Activated T-helper 1 cell treated with anti-CD3 and anti-CD28 coated beads, Interleukin-12 subunit alpha, Interleukin-12 subunit beta, Interleukin-2, Interleukin-4 antibody, amounts not matched to agents 30 ng/mL and 10 ng/mL and 1 ng/mL, durations not matched to agents 14 hours and 24 hours and 36 hours (primary cell): ENCODE measurements at regions of chr4 and their contacts with region 1.

Region 1: GRCh38 chr4:77240469-77241066 is 83.6 kb downstream of the CCNG2 start:
- DNase-seq: peak; percentile 12
- H3K4me3 Mint-ChIP-seq: no peak overlapping the region
- H3K27ac Mint-ChIP-seq: no peak overlapping the region
- H3K4me1 Mint-ChIP-seq: no peaks in the 10 kb centered on the region
- H3K27me3 Mint-ChIP-seq: peaks cover 10% of the 10 kb centered on the region

Region 2: GRCh38 chr4:77269161-77269904 is 28.8 kb after region 1 on chr4:
- intact Hi-C with region 1: no loop called
- DNase-seq: no peak
- H3K4me3 Mint-ChIP-seq: no peak overlapping the region
- H3K27ac Mint-ChIP-seq: no peak overlapping the region
- H3K4me1 Mint-ChIP-seq: no peaks in the 10 kb centered on the region
- H3K27me3 Mint-ChIP-seq: peaks cover 2% of the 10 kb centered on the region

Region 3: DNA sequence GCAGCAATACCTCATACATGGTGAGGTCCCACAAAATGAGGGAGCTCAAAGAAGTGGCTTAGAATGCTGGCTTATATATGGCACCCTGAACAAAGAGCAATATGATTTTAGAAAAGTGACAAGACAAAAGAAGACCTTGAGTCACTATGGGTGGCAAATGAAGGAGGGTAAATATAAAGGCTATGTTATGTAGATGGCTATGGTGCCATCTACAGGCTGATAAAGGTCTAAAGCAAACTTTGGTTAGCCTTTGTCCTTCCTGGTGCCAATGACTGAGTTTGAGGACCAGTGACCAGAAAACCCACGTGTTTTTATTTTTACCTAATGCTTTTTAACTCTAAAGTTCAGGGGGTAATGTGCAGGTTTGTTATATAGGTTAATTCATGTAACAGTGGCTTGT is 68.3 kb after region 1 on chr4:
- intact Hi-C with region 1: loop called (anchors 1 kb)
- DNase-seq: no peak
- H3K4me3 Mint-ChIP-seq: no peak overlapping the region
- H3K27ac Mint-ChIP-seq: no peak overlapping the region
- H3K4me1 Mint-ChIP-seq: no peaks in the 10 kb centered on the region
- H3K27me3 Mint-ChIP-seq: peaks cover 5% of the 10 kb centered on the region

Region 4: DNA sequence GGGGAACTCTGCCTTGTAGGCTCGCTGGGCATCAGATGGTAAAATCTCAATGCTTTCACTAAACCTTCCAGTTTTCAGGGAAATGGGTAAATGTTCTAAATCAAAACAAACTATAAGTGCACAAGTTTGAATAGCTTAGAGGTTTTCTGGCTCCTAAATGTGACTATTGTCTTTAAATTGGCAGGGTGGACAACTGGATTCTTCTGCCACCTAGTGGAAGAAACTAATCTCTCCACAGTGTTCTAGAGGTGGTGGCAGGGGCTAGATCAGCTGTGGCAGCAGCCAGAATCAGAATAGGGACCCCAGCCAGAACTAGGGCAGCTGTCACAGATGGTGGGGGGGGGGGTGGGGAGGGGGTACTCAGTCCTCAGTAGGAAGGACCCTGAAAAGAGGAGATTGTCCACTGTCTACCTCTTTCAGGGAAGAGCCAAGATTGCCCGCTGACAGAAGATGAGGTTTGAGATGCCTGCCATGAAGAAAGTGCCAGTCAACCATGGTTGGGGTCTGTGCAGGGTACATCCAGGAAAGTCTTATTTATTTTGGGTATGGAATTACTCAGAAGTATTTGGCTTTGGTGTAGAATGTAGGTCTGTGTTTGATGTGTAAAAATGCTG is 117.9 kb after region 1 on chr4:
- intact Hi-C with region 1: loop called (anchors 1 kb)
- DNase-seq: no peak
- H3K4me3 Mint-ChIP-seq: no peak overlapping the region
- H3K27ac Mint-ChIP-seq: no peak overlapping the region
- H3K4me1 Mint-ChIP-seq: no peaks in the 10 kb centered on the region
- H3K27me3 Mint-ChIP-seq: no peaks in the 10 kb centered on the region

Region 5: DNA sequence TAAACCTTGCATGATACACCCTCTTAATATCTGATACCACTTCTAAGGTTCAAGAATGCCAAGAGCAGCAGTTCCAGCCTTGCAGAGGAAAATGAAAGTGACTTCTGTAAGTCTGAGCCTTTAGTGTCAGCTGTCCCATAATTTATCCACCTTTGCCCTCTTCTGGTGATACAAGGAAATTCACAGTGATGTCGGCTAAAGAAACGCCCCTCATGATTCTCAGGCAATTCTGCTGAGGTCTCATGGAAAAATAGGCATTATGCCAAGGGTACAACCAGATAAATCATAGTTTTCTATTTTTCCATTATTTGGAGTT is 192.8 kb after region 1 on chr4:
- intact Hi-C with region 1: loop called (anchors 2 kb)
- DNase-seq: peak; percentile 4
- H3K4me3 Mint-ChIP-seq: no peak overlapping the region
- H3K27ac Mint-ChIP-seq: no peak overlapping the region
- H3K4me1 Mint-ChIP-seq: peaks cover 8% of the 10 kb centered on the region
- H3K27me3 Mint-ChIP-seq: no peaks in the 10 kb centered on the region